Colonic mucosa (tissue), 4 donors: ENCODE measurements at regions of chr1 and their contacts with region 1.

Region 1: DNA sequence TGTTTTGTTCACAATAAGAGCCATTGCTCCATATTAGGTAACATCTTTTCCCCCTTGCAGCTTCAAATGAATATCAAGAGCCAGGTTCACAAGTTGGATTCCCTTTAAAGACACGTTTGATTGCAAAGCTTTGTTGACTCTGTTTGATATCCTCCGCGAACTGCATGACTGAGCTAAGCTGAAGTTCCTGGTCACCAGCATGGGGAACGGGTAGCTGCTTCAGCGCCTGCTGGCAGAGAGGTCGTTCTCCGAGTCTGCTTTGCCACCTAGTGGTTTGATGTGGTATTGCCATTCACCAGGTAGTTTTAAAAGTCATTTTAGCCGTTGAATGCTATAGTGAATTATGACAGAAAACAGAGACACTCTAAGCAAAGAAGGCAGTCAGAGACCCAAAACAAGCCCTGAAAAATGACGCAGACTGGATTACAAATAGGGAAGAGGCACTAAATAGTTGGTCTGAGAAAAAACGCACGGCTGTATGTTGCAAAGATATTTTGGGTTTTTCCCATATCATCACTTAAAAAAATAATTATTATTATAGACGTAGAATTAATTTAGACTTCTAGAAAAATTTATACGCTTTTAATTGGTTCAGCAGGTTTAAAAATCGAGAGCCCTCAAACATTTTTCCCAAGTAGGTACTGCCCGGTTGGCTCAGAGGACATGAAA is 193.5 kb upstream of the FMN2 start:
- DNase-seq: peak; percentile 81
- H3K4me3 ChIP-seq: no peak overlapping the region
- H3K27ac ChIP-seq: no peak overlapping the region
- H3K4me1 ChIP-seq: no peaks in the 10 kb centered on the region
- H3K27me3 ChIP-seq: no peaks in the 10 kb centered on the region
- CTCF ChIP-seq: peak; percentile 93

Region 2: GRCh38 chr1:239293350-239294110 is 604.7 kb before region 1 on chr1:
- intact Hi-C with region 1: loop called (anchors 10 kb)
- DNase-seq: peak; percentile 78
- H3K4me3 ChIP-seq: no peak overlapping the region
- H3K27ac ChIP-seq: peak overlapping the region; percentile 2
- H3K4me1 ChIP-seq: no peaks in the 10 kb centered on the region
- H3K27me3 ChIP-seq: no peaks in the 10 kb centered on the region
- CTCF ChIP-seq: no peak

Region 3: GRCh38 chr1:239413916-239414315 is 484.3 kb before region 1 on chr1:
- intact Hi-C with region 1: loop called (anchors 5 kb)
- DNase-seq: no peak
- H3K4me3 ChIP-seq: no peak overlapping the region
- H3K27ac ChIP-seq: no peak overlapping the region
- H3K4me1 ChIP-seq: no peaks in the 10 kb centered on the region
- H3K27me3 ChIP-seq: no peaks in the 10 kb centered on the region
- CTCF ChIP-seq: no peak

Region 4: DNA sequence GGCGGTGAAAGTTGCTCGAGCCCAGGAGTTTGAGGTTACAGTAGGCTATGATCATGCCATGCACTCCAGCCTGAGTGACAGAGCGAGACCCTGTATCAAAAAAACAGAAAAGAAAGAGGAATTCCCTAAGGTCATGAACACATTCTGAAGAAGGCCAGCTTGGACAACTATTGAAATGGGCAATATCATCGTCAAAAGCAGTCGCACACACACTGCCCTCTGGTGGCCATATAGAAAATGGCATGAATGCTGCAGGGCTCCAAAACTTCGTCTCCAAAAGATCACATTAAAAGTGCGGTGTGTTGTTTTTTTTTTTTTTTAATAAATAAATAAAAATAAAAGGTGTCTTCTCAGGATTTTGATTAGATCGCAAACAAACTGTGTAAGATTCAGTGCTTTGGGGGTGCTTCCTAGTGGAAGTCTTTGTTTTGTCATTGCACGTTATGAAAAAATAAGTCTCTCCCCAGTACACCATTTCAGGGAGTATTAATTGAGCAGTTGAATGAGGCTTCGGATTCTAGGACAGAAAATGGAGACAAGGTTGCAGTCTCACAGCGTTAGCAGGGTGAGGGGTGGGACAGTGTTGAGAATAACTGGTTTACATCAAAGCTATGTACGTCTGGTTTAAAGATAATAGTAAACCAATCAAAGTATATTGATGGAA is 106.0 kb after region 1 on chr1:
- intact Hi-C with region 1: no loop called
- DNase-seq: no peak
- H3K4me3 ChIP-seq: no peak overlapping the region
- H3K27ac ChIP-seq: no peak overlapping the region
- H3K4me1 ChIP-seq: no peaks in the 10 kb centered on the region
- H3K27me3 ChIP-seq: peaks cover 6% of the 10 kb centered on the region
- CTCF ChIP-seq: peak; percentile 83